T-cell (primary cell): ENCODE measurements at regions of chr2 and their contacts with region 1.

Region 1: GRCh38 chr2:102615622-102616436 is 3.5 kb upstream of the SLC9A2 start:
- DNase-seq: peak in 24 of 35 experiments; percentile 8 to 55 (median 20)
- ATAC-seq: peak in 2 of 4 experiments; percentile 38 to 65
- H3K4me3 ChIP-seq: no peak overlapping the region
- H3K4me3 Mint-ChIP-seq: no peak overlapping the region
- H3K27ac ChIP-seq: no peak overlapping the region
- H3K27ac Mint-ChIP-seq: no peak overlapping the region
- H3K4me1 ChIP-seq: peaks cover 2 to 13% of the 10 kb centered on the region in 2 experiments
- H3K4me1 Mint-ChIP-seq: peaks cover 10 to 15% (median 14%) of the 10 kb centered on the region in 3 donors
- H3K27me3 ChIP-seq: peaks cover 10 to 19% of the 10 kb centered on the region in 2 experiments
- H3K27me3 Mint-ChIP-seq: peaks cover 44 to 47% of the 10 kb centered on the region in 2 donors

Region 2: GRCh38 chr2:102473020-102473419 is 142.8 kb before region 1 on chr2 and contains the start of gene SLC9A4:
- CTCF ChIA-PET with region 1: interaction called in 1 of 2 experiments, 15 read pairs
- POLR2A ChIA-PET with region 1: no interaction called
- DNase-seq: peak in 31 of 35 experiments; percentile 9 to 66 (median 32)
- ATAC-seq: peak in 3 of 4 experiments; percentile 57 to 62 (median 60)
- H3K4me3 ChIP-seq: no peak within 1 kb of the TSS
- H3K4me3 Mint-ChIP-seq: no peak within 1 kb of the TSS
- H3K27ac ChIP-seq: no peak within 1 kb of the TSS
- H3K27ac Mint-ChIP-seq: no peak within 1 kb of the TSS
- H3K4me1 ChIP-seq: no peaks in the 10 kb centered on the region
- H3K4me1 Mint-ChIP-seq: no peaks in the 10 kb centered on the region
- H3K27me3 ChIP-seq: no peaks in the 10 kb centered on the region
- H3K27me3 Mint-ChIP-seq: peaks cover 28% of the 10 kb centered on the region in 2 donors
- total RNA-seq, gene SLC9A4: 0.09 to 0.13 TPM in 2 of 5 donors, not detected in the others